ENCODE measurements at regions of chr2 and their contacts with region 1.

Region 1: GRCh38 chr2:26745609-26746327 is 18.3 kb upstream of the SLC35F6 start:
- DNase-seq: peak; percentile 48
- H3K4me3 ChIP-seq: no peak overlapping the region
- H3K27ac ChIP-seq: no peak overlapping the region
- H3K4me1 ChIP-seq: no peaks in the 10 kb centered on the region
- H3K27me3 ChIP-seq: peaks cover 1% of the 10 kb centered on the region
- CTCF ChIP-seq: peak; percentile 86 to 96

Region 2: GRCh38 chr2:26605195-26605998 is 140.4 kb before region 1 on chr2:
- CTCF ChIA-PET with region 1: interaction called, 12 read pairs
- dilution Hi-C with region 1: no loop called
- in situ Hi-C with region 1: loop called (anchors 5 kb)
- intact Hi-C with region 1: loop called (anchors 1 kb)
- DNase-seq: peak; percentile 35
- H3K4me3 ChIP-seq: no peak overlapping the region
- H3K27ac ChIP-seq: no peak overlapping the region
- H3K4me1 ChIP-seq: peaks cover 6% of the 10 kb centered on the region
- H3K27me3 ChIP-seq: no peaks in the 10 kb centered on the region
- CTCF ChIP-seq: peak; percentile 77 to 90

Region 3: GRCh38 chr2:26757873-26758789 is 12.4 kb after region 1 on chr2:
- CTCF ChIA-PET with region 1: no interaction called
- dilution Hi-C with region 1: no loop called
- in situ Hi-C with region 1: no loop called
- intact Hi-C with region 1: no loop called
- DNase-seq: peak; percentile 98
- H3K4me3 ChIP-seq: no peak overlapping the region
- H3K27ac ChIP-seq: peak overlapping the region; percentile 80
- H3K4me1 ChIP-seq: peaks cover 16% of the 10 kb centered on the region
- H3K27me3 ChIP-seq: no peaks in the 10 kb centered on the region
- CTCF ChIP-seq: no peak